OCI-LY7 (cell line): ENCODE measurements at regions of chr1 and their contacts with region 1.

Region 1: DNA sequence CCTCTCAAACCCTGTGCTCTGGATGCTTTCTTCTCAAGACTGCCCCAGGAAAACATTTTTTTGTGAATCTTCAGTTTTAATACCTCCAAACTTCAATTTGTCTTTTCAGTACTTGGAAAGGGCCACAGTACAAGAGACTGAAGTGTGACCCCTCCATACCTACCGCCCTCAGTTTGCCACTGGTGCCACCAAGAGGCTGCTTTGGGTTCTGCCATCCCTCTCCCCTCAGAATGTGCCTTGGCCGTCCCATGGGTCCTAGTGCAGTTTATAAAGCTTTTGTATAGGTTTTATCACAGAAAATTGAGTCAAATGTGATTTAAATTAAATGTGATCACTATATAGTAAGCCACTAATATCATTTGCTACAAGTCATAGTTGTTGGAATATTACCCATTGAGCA is 60.8 kb upstream of the PGD start:
- DNase-seq: peak; percentile 59
- H3K4me3 ChIP-seq: no peak overlapping the region
- H3K27ac ChIP-seq: no peak overlapping the region
- H3K4me1 ChIP-seq: no peaks in the 10 kb centered on the region
- CTCF ChIP-seq: peak; percentile 96

Region 2: DNA sequence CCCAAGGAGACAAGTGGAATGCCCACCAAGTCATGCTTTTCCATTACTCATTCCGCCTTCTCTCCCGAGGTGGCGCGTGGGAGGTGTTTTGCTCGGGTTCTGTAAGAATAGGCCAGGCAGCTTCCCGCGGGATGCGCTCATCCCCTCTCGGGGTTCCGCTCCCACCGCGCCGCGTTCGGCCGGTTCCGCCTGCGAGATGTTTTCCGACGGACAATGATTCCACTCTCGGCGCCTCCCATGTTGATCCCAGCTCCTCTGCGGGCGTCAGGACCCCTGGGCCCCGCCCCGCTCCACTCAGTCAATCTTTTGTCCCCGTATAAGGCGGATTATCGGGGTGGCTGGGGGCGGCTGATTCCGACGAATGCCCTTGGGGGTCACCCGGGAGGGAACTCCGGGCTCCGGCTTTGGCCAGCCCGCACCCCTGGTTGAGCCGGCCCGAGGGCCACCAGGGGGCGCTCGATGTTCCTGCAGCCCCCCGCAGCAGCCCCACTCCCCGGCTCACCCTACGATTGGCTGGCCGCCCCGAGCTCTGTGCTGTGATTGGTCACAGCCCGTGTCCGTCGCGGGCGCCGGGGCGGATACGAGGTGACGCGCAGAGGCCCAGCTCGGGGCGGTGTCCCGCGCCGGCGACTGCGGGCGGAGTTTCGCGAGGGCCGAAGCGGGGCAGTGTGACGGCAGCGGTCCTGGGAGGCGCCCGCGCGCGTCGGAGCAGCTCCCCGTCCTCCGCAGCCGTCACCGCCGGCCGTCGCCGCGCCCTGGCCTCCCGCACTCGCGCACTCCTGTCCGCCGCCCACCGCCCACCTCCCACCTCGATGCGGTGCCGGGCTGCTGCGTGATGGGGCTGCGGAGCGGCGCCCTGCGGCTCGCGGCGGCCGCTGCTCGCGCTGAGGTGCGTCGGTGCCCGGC is 127.9 kb before region 1 on chr1 and contains the start of gene KIF1B:
- CTCF ChIA-PET with region 1: interaction called, 3 read pairs
- POLR2A ChIA-PET with region 1: no interaction called
- intact Hi-C with region 1: loop called (anchors 1 kb)
- DNase-seq: peak; percentile 97
- H3K4me3 ChIP-seq: peak within 1 kb of the TSS; percentile 78
- H3K27ac ChIP-seq: no peak within 1 kb of the TSS
- H3K4me1 ChIP-seq: peaks cover 11% of the 10 kb centered on the region
- CTCF ChIP-seq: peak; percentile 88
- total RNA-seq, gene KIF1B: 2.2 and 3.8 TPM in 2 replicates

Region 3: GRCh38 chr1:10459181-10459580 is 121.1 kb after region 1 on chr1:
- CTCF ChIA-PET with region 1: no interaction called
- POLR2A ChIA-PET with region 1: no interaction called
- intact Hi-C with region 1: no loop called
- DNase-seq: no peak
- H3K4me3 ChIP-seq: no peak overlapping the region
- H3K27ac ChIP-seq: no peak overlapping the region
- H3K4me1 ChIP-seq: peaks cover 10% of the 10 kb centered on the region
- CTCF ChIP-seq: no peak